Activated CD4-positive, alpha-beta T cell treated with anti-CD3 and anti-CD28 coated beads for 36 hours (primary cell): ENCODE measurements at regions of chr2 and their contacts with region 1.

Region 1: GRCh38 chr2:85635636-85636035 is 19.6 kb downstream of the USP39 start:
- DNase-seq: no peak
- ATAC-seq: no peak
- H3K4me3 Mint-ChIP-seq: no peak overlapping the region
- H3K27ac Mint-ChIP-seq: no peak overlapping the region
- H3K4me1 Mint-ChIP-seq: peaks cover 10% of the 10 kb centered on the region
- H3K27me3 Mint-ChIP-seq: no peaks in the 10 kb centered on the region

Region 2: GRCh38 chr2:85648619-85649018 is 13.0 kb after region 1 on chr2:
- CTCF ChIA-PET with region 1: interaction called, 26 read pairs
- POLR2A ChIA-PET with region 1: no interaction called
- intact Hi-C with region 1: no loop called
- DNase-seq: peak; percentile 35
- ATAC-seq: peak; percentile 36
- H3K4me3 Mint-ChIP-seq: no peak overlapping the region
- H3K27ac Mint-ChIP-seq: peak overlapping the region; percentile 65
- H3K4me1 Mint-ChIP-seq: no peaks in the 10 kb centered on the region
- H3K27me3 Mint-ChIP-seq: no peaks in the 10 kb centered on the region

Region 3: GRCh38 chr2:85655961-85656417 is 20.4 kb after region 1 on chr2:
- CTCF ChIA-PET with region 1: interaction called, 37 read pairs
- POLR2A ChIA-PET with region 1: interaction called, 4 read pairs
- intact Hi-C with region 1: no loop called
- DNase-seq: no peak
- ATAC-seq: no peak
- H3K4me3 Mint-ChIP-seq: no peak overlapping the region
- H3K27ac Mint-ChIP-seq: no peak overlapping the region
- H3K4me1 Mint-ChIP-seq: no peaks in the 10 kb centered on the region
- H3K27me3 Mint-ChIP-seq: no peaks in the 10 kb centered on the region

Region 4: DNA sequence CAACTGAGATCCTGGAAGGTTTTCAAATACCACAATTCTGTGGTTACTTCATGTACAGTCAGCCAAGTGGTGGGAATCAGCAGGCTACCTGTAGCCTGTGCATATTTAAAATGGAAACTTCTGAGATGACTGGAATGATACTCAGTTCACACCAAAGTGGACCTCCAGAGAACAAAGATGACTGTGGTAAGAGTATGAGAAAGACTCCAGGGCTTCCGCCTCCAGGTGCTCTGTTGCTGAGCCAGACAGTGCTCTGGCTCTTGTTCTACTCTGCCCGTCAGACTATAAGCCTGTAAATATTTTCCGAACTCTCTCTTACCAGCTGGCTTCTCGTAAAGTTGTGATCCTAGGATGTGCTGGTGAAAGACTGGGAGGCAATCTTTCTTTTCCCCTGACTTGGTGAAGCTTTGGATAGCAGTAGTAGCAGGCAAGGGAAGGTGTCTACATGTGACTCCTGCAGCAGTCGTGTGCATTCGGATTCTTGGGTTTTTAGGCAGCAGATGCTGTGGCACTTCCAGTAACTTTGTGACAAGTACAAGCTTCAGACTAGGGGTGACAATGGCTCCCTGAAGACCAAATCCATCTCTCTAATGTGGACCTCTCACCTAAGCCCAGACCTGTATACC is 230.0 kb after region 1 on chr2:
- CTCF ChIA-PET with region 1: no interaction called
- POLR2A ChIA-PET with region 1: no interaction called
- intact Hi-C with region 1: no loop called
- DNase-seq: peak; percentile 61
- ATAC-seq: peak; percentile 89
- H3K4me3 Mint-ChIP-seq: no peak overlapping the region
- H3K27ac Mint-ChIP-seq: no peak overlapping the region
- H3K4me1 Mint-ChIP-seq: peaks cover 54% of the 10 kb centered on the region
- H3K27me3 Mint-ChIP-seq: no peaks in the 10 kb centered on the region

Region 5: GRCh38 chr2:86140969-86141392 is 505.3 kb after region 1 on chr2:
- CTCF ChIA-PET with region 1: interaction called, 3 read pairs
- POLR2A ChIA-PET with region 1: no interaction called
- intact Hi-C with region 1: loop called in 1 of 2 experiments (anchors 10 kb)
- DNase-seq: no peak
- ATAC-seq: no peak
- H3K4me3 Mint-ChIP-seq: no peak overlapping the region
- H3K27ac Mint-ChIP-seq: peak overlapping the region; percentile 14
- H3K4me1 Mint-ChIP-seq: peaks cover 14% of the 10 kb centered on the region
- H3K27me3 Mint-ChIP-seq: no peaks in the 10 kb centered on the region